Right ventricle myocardium inferior (tissue), 1 donor: ENCODE measurements at regions of chr5 and their contacts with region 1.

Region 1: GRCh38 chr5:68661237-68661636 is 432.6 kb upstream of the SLC30A5 start:
- DNase-seq: no peak
- ATAC-seq: peak; percentile 34

Region 2: GRCh38 chr5:67465537-67466207 is 1195.6 kb before region 1 on chr5:
- intact Hi-C with region 1: loop called (anchors 5 kb)
- DNase-seq: no peak
- ATAC-seq: no peak

Region 3: DNA sequence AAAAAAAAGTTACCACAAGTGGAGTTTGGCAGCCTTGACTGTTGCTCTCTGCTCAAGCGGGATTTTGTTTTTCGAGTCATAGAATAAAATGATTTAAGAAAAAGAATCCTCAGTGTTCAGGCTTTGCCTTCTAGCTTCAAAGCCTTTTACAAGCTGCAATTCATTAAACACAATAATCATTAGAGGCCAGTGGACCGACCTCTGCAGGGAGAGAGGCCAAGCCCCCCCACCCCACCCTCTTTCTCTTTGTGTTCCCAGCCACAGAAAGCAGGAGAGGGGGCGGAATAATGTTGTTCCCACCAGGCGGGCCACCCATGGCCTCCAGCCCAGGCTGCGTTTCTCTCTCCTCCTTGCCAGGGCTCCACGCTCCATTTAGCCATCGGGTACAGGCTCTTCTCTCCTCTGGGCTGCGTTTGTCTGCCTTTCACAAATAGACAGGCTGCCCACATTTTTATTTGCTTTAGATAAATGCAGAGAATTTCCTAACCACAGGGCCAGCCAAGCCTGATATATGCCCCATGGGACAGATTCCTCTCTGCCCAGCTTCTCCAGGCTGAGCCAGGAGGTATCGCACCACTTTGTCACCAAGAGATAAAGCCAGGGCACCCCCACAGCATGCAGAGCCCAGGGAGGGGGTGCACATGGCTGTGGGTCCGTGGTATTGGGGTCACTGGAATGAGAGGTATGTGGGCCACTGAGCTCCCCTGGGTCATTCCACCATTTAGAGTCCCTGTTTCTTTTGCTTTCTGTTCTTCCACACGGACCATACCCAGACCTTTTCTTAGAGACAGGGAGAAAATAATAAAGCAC is 126.9 kb before region 1 on chr5:
- intact Hi-C with region 1: no loop called
- DNase-seq: no peak
- ATAC-seq: peak; percentile 64